ENCODE measurements at regions of chr1 and their contacts with region 1.

Region 1: DNA sequence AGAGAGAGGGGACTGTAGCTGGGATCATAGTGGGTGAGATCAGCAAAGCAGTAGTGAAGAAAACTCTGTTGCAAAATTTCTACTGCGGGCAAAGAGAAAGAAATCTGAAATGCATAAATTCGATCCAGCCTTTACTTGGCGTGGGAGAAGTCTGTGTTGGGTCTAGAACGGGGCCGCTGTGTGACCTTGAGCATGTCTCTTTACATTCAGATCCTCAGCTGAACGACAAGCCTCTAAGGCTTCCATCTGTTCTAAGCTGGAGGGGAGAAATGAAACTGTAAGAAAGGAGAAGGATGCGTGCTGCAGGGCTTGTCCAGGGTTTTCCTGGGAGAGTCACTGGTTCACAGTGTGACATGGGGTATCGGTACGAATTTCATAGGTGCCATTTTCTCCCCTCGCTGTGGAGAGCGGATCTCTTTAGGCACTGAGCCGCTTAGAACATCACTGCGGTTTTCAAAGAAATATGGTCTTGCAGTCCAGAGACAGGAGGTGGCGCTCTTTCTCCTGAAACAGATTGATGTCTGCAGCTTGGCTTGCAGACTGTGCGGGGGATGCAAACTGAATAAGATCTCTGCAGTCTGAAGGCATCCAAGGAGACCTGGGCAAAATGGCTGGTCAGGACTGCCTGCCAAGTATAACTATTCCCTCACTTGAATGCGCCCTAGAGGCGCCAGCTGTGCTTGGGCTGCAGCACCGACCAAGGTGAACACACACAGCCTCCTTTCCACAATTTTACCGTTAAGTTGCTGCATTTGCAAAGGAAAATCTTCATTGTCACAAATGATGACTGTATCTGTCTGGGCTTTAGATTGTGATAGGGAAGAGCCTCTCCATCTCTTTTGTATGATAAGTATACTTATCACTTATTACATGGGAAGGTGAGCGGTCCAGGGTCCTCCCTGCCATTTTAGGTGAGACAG is 104.1 kb downstream of the XCL2 start:
- DNase-seq: peak; percentile 78
- H3K4me3 Mint-ChIP-seq: peak overlapping the region; percentile 57
- H3K27ac Mint-ChIP-seq: no peak overlapping the region
- H3K4me1 Mint-ChIP-seq: peaks cover 52% of the 10 kb centered on the region
- H3K27me3 Mint-ChIP-seq: no peaks in the 10 kb centered on the region

Region 2: GRCh38 chr1:168483539-168483938 is 43.8 kb after region 1 on chr1:
- intact Hi-C with region 1: loop called (anchors 5 kb)
- DNase-seq: no peak
- H3K4me3 Mint-ChIP-seq: no peak overlapping the region
- H3K27ac Mint-ChIP-seq: no peak overlapping the region
- H3K4me1 Mint-ChIP-seq: peaks cover 45% of the 10 kb centered on the region
- H3K27me3 Mint-ChIP-seq: no peaks in the 10 kb centered on the region

Region 3: DNA sequence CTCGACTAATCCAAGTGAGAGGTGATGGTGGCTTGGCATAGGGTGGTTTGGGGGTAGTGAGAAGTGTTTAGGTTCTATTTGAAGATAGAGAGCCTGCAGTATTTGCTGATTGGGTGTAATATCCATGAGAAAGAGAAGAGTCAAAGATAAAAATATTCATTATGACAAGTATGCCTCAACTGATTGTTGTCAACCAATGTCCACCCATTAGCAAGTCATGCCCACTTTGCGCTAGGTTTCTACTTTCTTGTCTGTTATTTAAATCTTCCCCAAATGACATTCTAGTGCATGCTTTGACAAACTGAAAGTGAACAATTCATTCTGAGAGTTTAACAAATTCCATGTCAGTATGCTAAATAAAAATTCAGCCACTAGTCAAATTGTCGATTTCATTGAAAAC is 132.9 kb after region 1 on chr1:
- intact Hi-C with region 1: loop called (anchors 1 kb)
- DNase-seq: no peak
- H3K4me3 Mint-ChIP-seq: no peak overlapping the region
- H3K27ac Mint-ChIP-seq: no peak overlapping the region
- H3K4me1 Mint-ChIP-seq: peaks cover 39% of the 10 kb centered on the region
- H3K27me3 Mint-ChIP-seq: peaks cover 9% of the 10 kb centered on the region

Region 4: GRCh38 chr1:168824418-168824817 is 384.7 kb after region 1 on chr1:
- intact Hi-C with region 1: loop called (anchors 5 kb)
- DNase-seq: no peak
- H3K4me3 Mint-ChIP-seq: no peak overlapping the region
- H3K27ac Mint-ChIP-seq: no peak overlapping the region
- H3K4me1 Mint-ChIP-seq: peaks cover 13% of the 10 kb centered on the region
- H3K27me3 Mint-ChIP-seq: peaks cover 6% of the 10 kb centered on the region

Region 5: GRCh38 chr1:169348383-169349036 is 908.8 kb after region 1 on chr1:
- intact Hi-C with region 1: loop called (anchors 1 kb)
- DNase-seq: no peak
- H3K4me3 Mint-ChIP-seq: no peak overlapping the region
- H3K27ac Mint-ChIP-seq: no peak overlapping the region
- H3K4me1 Mint-ChIP-seq: peaks cover 17% of the 10 kb centered on the region
- H3K27me3 Mint-ChIP-seq: peaks cover 2% of the 10 kb centered on the region